H1 (cell line): ENCODE measurements at regions of chr13 and their contacts with region 1.

Region 1: GRCh38 chr13:98653463-98653985 is 76.6 kb upstream of the STK24 start:
- DNase-seq: peak; percentile 77 to 90
- H3K4me3 ChIP-seq: no peak overlapping the region
- H3K27ac ChIP-seq: no peak overlapping the region
- H3K4me1 ChIP-seq: no peaks in the 10 kb centered on the region
- H3K27me3 ChIP-seq: no peaks in the 10 kb centered on the region; a peak in 1 of 7 replicates
- CTCF ChIP-seq: peak; percentile 81 to 98 (median 97)
- EP300 ChIP-seq: no peak
- POLR2A ChIP-seq: no peak
- RAD21 ChIP-seq: peak; percentile 90 to 93

Region 2: DNA sequence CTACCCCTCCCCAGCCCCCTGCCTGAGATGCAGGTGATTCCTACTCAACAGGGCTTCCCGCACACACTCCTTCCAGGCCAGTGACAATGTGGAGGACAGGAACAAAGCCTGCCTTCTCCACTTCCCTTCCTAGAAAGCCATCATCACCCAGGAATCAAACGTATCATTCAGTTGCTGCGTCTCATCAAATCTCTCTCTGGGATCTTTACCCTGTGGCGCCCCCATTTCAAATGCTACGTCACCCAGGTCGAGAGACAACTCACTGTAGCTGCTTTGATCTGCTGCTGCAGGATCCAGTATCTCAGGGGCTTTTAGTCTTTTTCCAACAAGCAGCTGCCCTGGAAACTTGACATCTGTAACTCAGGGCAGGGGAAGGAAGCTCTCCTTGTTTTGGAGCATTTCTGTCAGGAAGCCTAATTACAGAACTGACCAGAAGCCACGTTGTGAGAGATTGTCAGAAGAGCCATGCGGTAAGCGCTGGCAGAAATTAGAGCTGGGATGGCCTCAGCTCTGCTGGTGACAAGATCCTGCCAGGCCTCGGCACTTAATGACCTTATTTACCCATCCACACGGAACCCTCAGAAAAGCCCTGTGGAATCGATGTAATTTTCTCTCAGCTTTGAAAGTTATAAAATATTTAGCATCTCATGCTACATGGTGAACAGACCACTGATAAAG is 217.2 kb before region 1 on chr13:
- CTCF ChIA-PET with region 1: interaction called, 10 read pairs
- POLR2A ChIA-PET with region 1: no interaction called
- DNase-seq: no peak
- H3K4me3 ChIP-seq: no peak overlapping the region
- H3K27ac ChIP-seq: no peak overlapping the region
- H3K4me1 ChIP-seq: no peaks in the 10 kb centered on the region
- H3K27me3 ChIP-seq: no peaks in the 10 kb centered on the region
- CTCF ChIP-seq: no peak
- EP300 ChIP-seq: no peak
- POLR2A ChIP-seq: no peak
- RAD21 ChIP-seq: peak in 1 of 2 experiments; percentile 1; a peak in 1 of 4 replicates

Region 3: DNA sequence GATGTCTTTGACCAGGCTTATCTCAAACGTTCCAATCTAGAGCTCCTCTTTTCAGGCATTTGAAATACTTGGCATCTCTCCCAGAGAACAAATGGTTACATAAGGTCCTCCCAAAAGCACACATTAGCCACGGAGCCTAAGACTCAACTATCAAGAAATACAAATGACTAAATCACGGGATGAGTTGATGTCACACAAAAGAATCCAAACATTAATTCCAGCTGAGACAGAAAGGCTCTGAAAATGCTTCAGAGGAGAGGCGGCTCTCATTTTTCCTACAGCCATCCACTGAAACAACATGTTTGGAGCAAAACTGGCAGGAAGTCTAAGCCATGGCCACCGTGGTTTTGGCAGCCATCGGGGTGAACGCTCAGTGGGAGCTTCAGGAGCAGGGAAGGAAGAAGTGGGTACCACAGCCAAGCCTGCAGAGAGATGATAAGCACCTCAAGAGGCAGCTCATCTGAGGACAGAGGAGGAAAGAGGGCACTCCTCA is 199.1 kb before region 1 on chr13:
- CTCF ChIA-PET with region 1: interaction called, 10 read pairs
- POLR2A ChIA-PET with region 1: no interaction called
- DNase-seq: no peak
- H3K4me3 ChIP-seq: no peak overlapping the region
- H3K27ac ChIP-seq: no peak overlapping the region
- H3K4me1 ChIP-seq: peaks cover 7 to 15% (median 9%) of the 10 kb centered on the region in 4 experiments
- H3K27me3 ChIP-seq: no peaks in the 10 kb centered on the region
- CTCF ChIP-seq: no peak
- EP300 ChIP-seq: no peak
- POLR2A ChIP-seq: no peak
- RAD21 ChIP-seq: no peak

Region 4: DNA sequence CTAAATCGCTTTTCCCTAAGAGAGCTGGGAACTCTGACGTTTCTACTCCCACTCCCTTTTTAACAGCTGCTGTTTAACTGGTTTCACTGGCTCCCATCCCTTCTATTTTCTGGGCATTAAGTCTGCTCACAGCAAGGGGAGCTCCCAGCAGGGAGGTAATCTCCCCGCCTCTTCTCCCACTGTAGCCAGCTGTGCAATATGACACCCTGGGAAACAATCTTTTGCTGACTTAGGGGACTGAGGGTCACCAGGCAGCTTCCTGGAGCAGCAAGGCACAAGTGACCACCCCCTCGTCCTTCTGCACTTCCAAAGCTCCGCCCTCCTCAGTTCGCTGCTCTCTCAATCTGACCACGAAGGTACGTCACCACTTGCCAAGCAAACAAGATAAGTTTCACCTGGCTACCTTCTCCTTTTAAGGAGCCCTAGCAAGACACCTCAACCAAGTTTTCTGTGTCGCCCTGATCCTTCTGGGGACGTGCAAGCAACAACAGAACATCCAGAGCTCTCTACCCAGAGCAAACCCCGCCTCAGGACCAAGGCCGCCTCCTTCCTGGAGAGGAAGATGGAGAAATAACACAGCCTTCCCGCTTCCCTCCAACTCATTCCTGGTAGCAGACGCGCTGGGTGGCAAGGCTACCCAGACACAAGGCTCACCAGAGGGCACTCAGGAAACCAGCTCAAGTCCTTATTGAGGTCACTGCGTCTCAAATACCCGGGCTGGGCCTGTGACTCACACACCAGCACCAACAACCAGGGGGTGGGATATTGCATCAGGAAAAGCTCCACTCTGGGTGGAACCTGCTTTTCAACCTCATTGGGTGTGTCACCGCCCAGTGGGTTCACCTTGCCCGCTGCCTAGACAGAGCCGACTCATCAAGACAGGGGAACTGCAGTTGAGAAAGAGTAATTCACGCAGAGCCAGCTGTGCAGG is 169.0 kb before region 1 on chr13:
- CTCF ChIA-PET with region 1: interaction called, 42 read pairs
- POLR2A ChIA-PET with region 1: no interaction called
- DNase-seq: peak in 1 of 2 experiments; percentile 73
- H3K4me3 ChIP-seq: peak overlapping the region in 3 of 4 experiments; percentile 11 to 43 (median 16); a peak in 4 of 8 replicates
- H3K27ac ChIP-seq: peak overlapping the region; percentile 65; the same call in 1 of the 2 replicates
- H3K4me1 ChIP-seq: peaks cover 13 to 48% (median 39%) of the 10 kb centered on the region in 4 experiments
- H3K27me3 ChIP-seq: no peaks in the 10 kb centered on the region
- CTCF ChIP-seq: no peak
- EP300 ChIP-seq: peak; percentile 2 to 61; a peak in 2 of 3 replicates
- POLR2A ChIP-seq: no peak; a peak in 1 of 3 replicates
- RAD21 ChIP-seq: no peak

Region 5: GRCh38 chr13:98598043-98598442 is 55.5 kb before region 1 on chr13:
- CTCF ChIA-PET with region 1: interaction called, 16 read pairs
- POLR2A ChIA-PET with region 1: no interaction called
- DNase-seq: no peak
- H3K4me3 ChIP-seq: no peak overlapping the region
- H3K27ac ChIP-seq: no peak overlapping the region
- H3K4me1 ChIP-seq: no peaks in the 10 kb centered on the region
- H3K27me3 ChIP-seq: no peaks in the 10 kb centered on the region; a peak in 1 of 7 replicates
- CTCF ChIP-seq: peak in 2 of 3 experiments; percentile 41 to 57; a peak in 2 of 4 replicates
- EP300 ChIP-seq: no peak
- POLR2A ChIP-seq: no peak
- RAD21 ChIP-seq: peak; percentile 42 to 66

Region 6: GRCh38 chr13:98632961-98633360 is 20.6 kb before region 1 on chr13:
- CTCF ChIA-PET with region 1: interaction called, 15 read pairs
- POLR2A ChIA-PET with region 1: no interaction called
- DNase-seq: no peak
- H3K4me3 ChIP-seq: no peak overlapping the region
- H3K27ac ChIP-seq: no peak overlapping the region
- H3K4me1 ChIP-seq: no peaks in the 10 kb centered on the region
- H3K27me3 ChIP-seq: no peaks in the 10 kb centered on the region
- CTCF ChIP-seq: no peak
- EP300 ChIP-seq: no peak
- POLR2A ChIP-seq: no peak
- RAD21 ChIP-seq: no peak

Region 7: GRCh38 chr13:98664924-98665637 is 11.6 kb after region 1 on chr13:
- CTCF ChIA-PET with region 1: interaction called, 17 read pairs
- POLR2A ChIA-PET with region 1: no interaction called
- DNase-seq: no peak
- H3K4me3 ChIP-seq: no peak overlapping the region
- H3K27ac ChIP-seq: no peak overlapping the region
- H3K4me1 ChIP-seq: no peaks in the 10 kb centered on the region
- H3K27me3 ChIP-seq: no peaks in the 10 kb centered on the region; a peak in 1 of 7 replicates
- CTCF ChIP-seq: no peak
- EP300 ChIP-seq: no peak
- POLR2A ChIP-seq: no peak
- RAD21 ChIP-seq: no peak